ENCODE measurements at regions of chrX and their contacts with region 1.

Region 1: DNA sequence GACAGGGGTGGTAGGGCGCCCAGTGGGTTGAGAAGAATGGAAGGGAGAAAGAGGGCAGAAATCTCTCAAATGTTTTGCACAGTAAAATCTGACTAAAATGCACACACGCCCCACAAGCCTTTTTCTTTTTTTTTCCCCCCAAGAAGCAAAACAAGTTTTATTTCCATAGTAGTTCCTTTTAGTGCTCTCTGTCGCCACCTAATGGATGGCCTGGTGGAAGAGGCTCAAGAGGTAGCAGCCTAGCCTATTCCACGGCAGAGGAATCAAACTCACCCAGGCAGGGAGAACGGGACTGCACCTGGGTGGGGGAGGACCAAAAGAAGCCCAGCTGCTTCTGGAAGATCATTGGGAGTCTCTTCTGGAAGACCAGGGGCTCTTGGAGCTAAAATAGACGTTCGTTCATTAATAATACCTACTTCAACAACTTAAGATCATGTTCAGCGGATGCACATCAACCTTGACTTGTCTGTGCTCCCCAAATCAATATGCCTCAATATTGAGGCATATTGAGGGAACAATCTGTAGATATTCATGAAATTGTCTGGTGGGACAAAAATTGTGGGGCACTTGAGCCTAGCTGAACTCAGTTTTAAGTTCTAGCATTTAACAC is 31.6 kb upstream of the IRAK1 start:
- DNase-seq: peak; percentile 29 to 66
- ATAC-seq: peak; percentile 34 to 39
- H3K4me3 ChIP-seq: peak overlapping the region in 1 of 4 donors; percentile 36
- H3K27ac ChIP-seq: peak overlapping the region; percentile 82 to 89 (median 88)
- H3K4me1 ChIP-seq: peaks cover 39 to 49% of the 10 kb centered on the region in 2 donors
- H3K27me3 ChIP-seq: no peaks in the 10 kb centered on the region
- CTCF ChIP-seq: peak in 4 of 5 experiments; percentile 61 to 80 (median 63)
- POLR2A ChIP-seq: no peak

Region 2: DNA sequence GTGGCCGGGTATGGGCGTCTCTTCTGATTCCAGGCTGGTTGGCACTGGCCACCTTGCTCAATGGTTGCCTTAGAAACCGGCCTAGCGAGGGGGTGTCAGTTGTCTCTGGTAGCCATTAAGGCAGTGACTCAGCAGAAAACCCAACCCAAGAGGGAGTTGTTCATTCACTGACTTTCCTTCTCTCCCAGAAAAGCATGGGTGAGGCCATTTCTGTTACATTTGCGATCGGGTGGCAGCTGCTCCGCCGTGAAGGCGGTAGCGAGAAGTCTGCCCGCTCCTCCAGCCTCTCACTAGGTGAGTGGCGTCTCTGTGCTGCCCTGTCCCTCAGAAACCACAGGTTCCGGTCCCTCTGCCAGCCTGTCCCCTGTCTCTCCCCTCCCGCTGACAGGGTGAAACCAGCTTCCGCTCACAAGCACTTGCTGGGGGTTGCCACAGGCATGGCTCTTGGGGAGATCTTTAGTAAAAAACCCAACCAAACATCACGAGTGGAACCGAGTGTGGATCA is 49.0 kb before region 1 on chrX:
- in situ Hi-C with region 1: no loop called
- intact Hi-C with region 1: no loop called
- DNase-seq: peak in 1 of 2 donors; percentile 53
- ATAC-seq: peak in 1 of 2 donors; percentile 87
- H3K4me3 ChIP-seq: peak overlapping the region in 1 of 4 donors; percentile 10
- H3K27ac ChIP-seq: peak overlapping the region in 2 of 4 donors; percentile 23 to 52
- H3K4me1 ChIP-seq: no peaks in the 10 kb centered on the region
- H3K27me3 ChIP-seq: no peaks in the 10 kb centered on the region
- CTCF ChIP-seq: no peak
- POLR2A ChIP-seq: no peak

Region 3: GRCh38 chrX:154013614-154014360 is 37.5 kb before region 1 on chrX:
- in situ Hi-C with region 1: loop called in 1 of 4 experiments (anchors 5 kb)
- intact Hi-C with region 1: loop called (anchors 1 kb)
- DNase-seq: no peak
- ATAC-seq: no peak
- H3K4me3 ChIP-seq: no peak overlapping the region
- H3K27ac ChIP-seq: no peak overlapping the region
- H3K4me1 ChIP-seq: peaks cover 5 to 6% of the 10 kb centered on the region in 2 donors
- H3K27me3 ChIP-seq: no peaks in the 10 kb centered on the region
- CTCF ChIP-seq: peak; percentile 63 to 91 (median 87)
- POLR2A ChIP-seq: no peak

Region 4: GRCh38 chrX:154019633-154020528 is 31.4 kb before region 1 on chrX and contains the start of gene IRAK1:
- in situ Hi-C with region 1: no loop called
- intact Hi-C with region 1: loop called (anchors 2 kb)
- DNase-seq: peak in 1 of 2 donors; percentile 57
- ATAC-seq: peak; percentile 86
- H3K4me3 ChIP-seq: peak within 1 kb of the TSS; percentile 56 to 65 (median 62)
- H3K27ac ChIP-seq: peak within 1 kb of the TSS; percentile 87 to 93 (median 89)
- H3K4me1 ChIP-seq: peaks cover 4% of the 10 kb centered on the region in 2 donors
- H3K27me3 ChIP-seq: no peaks in the 10 kb centered on the region
- CTCF ChIP-seq: no peak
- POLR2A ChIP-seq: peak; percentile 68 to 88
- total RNA-seq, gene IRAK1: 73.9 to 157 (median 115) TPM